Colonic mucosa (tissue), 4 donors: ENCODE measurements at regions of chr18 and their contacts with region 1.

Region 1: GRCh38 chr18:77478646-77479442 is 229.2 kb downstream of the GALR1 start:
- DNase-seq: peak; percentile 29
- H3K4me3 ChIP-seq: no peak overlapping the region
- H3K27ac ChIP-seq: no peak overlapping the region
- H3K4me1 ChIP-seq: no peaks in the 10 kb centered on the region
- H3K27me3 ChIP-seq: no peaks in the 10 kb centered on the region
- CTCF ChIP-seq: no peak

Region 2: GRCh38 chr18:76528477-76529432 is 950.1 kb before region 1 on chr18:
- intact Hi-C with region 1: no loop called
- DNase-seq: peak; percentile 25
- H3K4me3 ChIP-seq: no peak overlapping the region
- H3K27ac ChIP-seq: peak overlapping the region; percentile 12
- H3K4me1 ChIP-seq: no peaks in the 10 kb centered on the region
- H3K27me3 ChIP-seq: no peaks in the 10 kb centered on the region
- CTCF ChIP-seq: no peak

Region 3: GRCh38 chr18:77422974-77423867 is 55.6 kb before region 1 on chr18:
- intact Hi-C with region 1: no loop called
- DNase-seq: no peak
- H3K4me3 ChIP-seq: no peak overlapping the region
- H3K27ac ChIP-seq: no peak overlapping the region
- H3K4me1 ChIP-seq: no peaks in the 10 kb centered on the region
- H3K27me3 ChIP-seq: no peaks in the 10 kb centered on the region
- CTCF ChIP-seq: no peak

Region 4: DNA sequence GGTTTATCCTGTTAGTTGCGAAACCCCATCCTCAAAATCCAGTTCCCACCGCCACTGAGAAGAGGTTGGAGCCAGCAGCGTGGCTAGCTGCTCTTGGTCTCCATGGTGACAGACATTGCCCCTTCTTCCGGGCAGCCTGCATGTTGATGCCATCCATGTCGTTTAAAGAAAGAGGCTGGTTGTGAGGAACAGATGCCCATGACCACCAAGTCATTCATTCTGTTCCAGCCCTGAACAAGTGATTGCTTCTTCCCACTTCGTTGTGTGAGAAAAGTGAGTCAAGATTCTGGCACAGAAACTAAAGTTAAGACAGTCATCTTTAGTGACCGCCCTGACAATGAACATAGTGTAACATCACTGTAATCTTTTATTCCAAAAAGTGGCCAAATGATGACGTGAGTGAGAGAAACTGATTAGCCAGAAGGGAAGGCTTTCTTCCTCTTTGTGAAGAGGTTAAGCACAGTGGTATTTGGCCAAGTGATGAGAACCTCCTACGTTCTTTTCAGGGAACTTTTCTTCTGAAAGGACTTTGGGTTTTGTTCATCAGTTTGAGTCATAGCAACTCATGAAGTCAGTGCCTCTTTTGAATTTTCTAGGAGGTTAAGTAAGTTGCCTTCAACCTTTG is 43.3 kb after region 1 on chr18:
- intact Hi-C with region 1: no loop called
- DNase-seq: no peak
- H3K4me3 ChIP-seq: no peak overlapping the region
- H3K27ac ChIP-seq: no peak overlapping the region
- H3K4me1 ChIP-seq: no peaks in the 10 kb centered on the region
- H3K27me3 ChIP-seq: no peaks in the 10 kb centered on the region
- CTCF ChIP-seq: no peak

Region 5: GRCh38 chr18:77650799-77651385 is 172.0 kb after region 1 on chr18:
- intact Hi-C with region 1: loop called (anchors 5 kb)
- DNase-seq: peak; percentile 70
- H3K4me3 ChIP-seq: no peak overlapping the region
- H3K27ac ChIP-seq: no peak overlapping the region
- H3K4me1 ChIP-seq: no peaks in the 10 kb centered on the region
- H3K27me3 ChIP-seq: no peaks in the 10 kb centered on the region
- CTCF ChIP-seq: peak; percentile 97